ENCODE measurements at regions of chr1 and their contacts with region 1.

Region 1: DNA sequence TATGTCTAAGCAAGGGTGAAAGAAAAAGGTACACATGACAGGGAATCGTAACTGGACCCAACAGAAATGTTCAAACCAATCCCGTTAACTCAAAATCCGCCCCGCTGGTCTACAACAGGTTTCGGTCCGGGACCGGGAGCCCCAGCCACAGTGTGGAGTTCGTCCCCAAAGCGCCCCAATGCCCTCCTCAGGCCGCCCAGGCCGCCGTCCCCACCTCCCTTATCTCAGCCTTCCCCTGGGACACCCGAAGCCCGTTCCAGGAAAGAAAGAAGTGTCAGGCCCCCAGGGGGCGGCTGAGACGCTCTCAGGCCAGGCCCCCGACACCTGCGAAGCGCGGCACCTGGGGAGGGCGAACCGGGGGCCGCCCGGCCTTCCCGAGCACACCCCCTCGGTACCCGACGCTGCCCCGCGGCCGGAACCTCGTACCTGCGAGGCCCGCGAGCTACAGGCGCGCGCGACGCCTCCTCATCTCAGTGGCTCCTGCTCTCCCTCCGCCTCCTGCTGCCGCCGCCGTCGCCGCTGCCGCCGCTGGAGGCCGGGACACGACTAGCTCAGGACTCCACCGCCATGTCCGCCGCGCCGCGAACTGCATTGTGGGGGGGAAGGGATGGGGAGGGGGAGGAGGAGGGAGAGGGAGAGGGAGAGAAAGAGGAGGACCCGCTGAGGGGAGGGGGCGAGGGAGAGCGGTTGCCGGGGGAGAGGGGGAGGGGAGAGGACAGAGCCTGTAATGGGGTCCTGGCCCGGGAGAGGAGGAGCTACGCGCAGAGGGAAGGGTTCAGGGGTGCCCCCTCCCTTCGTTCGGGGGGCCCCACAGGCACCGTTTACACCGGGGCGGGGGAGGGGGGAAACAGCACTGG is at the start of gene TUT4:
- DNase-seq: peak; percentile 87
- H3K4me3 ChIP-seq: peak within 1 kb of the TSS; percentile 93 to 99 (median 96)
- H3K27ac ChIP-seq: peak within 1 kb of the TSS; percentile 88 to 96 (median 92)
- H3K4me1 ChIP-seq: peaks cover 0 to 33% (median 18%) of the 10 kb centered on the region in 4 donors
- H3K27me3 ChIP-seq: no peaks in the 10 kb centered on the region
- CTCF ChIP-seq: no peak
- EP300 ChIP-seq: no peak
- POLR2A ChIP-seq: no peak
- total RNA-seq, gene TUT4: 50.4 to 66.9 (median 58.3) TPM

Region 2: GRCh38 chr1:52404116-52404986 is 148.4 kb before region 1 on chr1 and contains the starts of genes ORC1 and PRPF38A:
- intact Hi-C with region 1: loop called (anchors 5 kb)
- DNase-seq: peak; percentile 99
- H3K4me3 ChIP-seq: peak within 1 kb of the TSS; percentile 56 to 87 (median 78)
- H3K27ac ChIP-seq: peak within 1 kb of the TSS; percentile 84 to 90 (median 89)
- H3K4me1 ChIP-seq: peaks cover 0 to 26% (median 23%) of the 10 kb centered on the region in 4 donors
- H3K27me3 ChIP-seq: no peaks in the 10 kb centered on the region
- CTCF ChIP-seq: peak; percentile 10 to 69 (median 48)
- EP300 ChIP-seq: no peak
- POLR2A ChIP-seq: peak; percentile 39 to 67
- total RNA-seq, gene ORC1: 0.36 to 0.95 TPM in 2 of 4 donors, not detected in the others
- total RNA-seq, gene PRPF38A: 12.4 to 20.0 (median 17.5) TPM

Region 3: GRCh38 chr1:52590275-52590674 is 37.5 kb after region 1 on chr1:
- intact Hi-C with region 1: no loop called
- DNase-seq: no peak
- H3K4me3 ChIP-seq: no peak overlapping the region
- H3K27ac ChIP-seq: no peak overlapping the region
- H3K4me1 ChIP-seq: no peaks in the 10 kb centered on the region
- H3K27me3 ChIP-seq: no peaks in the 10 kb centered on the region
- CTCF ChIP-seq: no peak
- EP300 ChIP-seq: no peak
- POLR2A ChIP-seq: no peak

Region 4: GRCh38 chr1:52601991-52602855 is 49.5 kb after region 1 on chr1 and contains the start of gene GPX7:
- intact Hi-C with region 1: loop called (anchors 2 kb)
- DNase-seq: peak; percentile 70
- H3K4me3 ChIP-seq: peak within 1 kb of the TSS; percentile 46 to 71 (median 64)
- H3K27ac ChIP-seq: peak within 1 kb of the TSS; percentile 80 to 89 (median 84)
- H3K4me1 ChIP-seq: peaks cover 0 to 33% (median 26%) of the 10 kb centered on the region in 4 donors
- H3K27me3 ChIP-seq: no peaks in the 10 kb centered on the region
- CTCF ChIP-seq: no peak
- EP300 ChIP-seq: no peak
- POLR2A ChIP-seq: no peak
- total RNA-seq, gene GPX7: 17.0 to 49.3 (median 24.5) TPM

Region 5: GRCh38 chr1:52697795-52698674 is 145.3 kb after region 1 on chr1 and contains the start of gene COA7:
- intact Hi-C with region 1: loop called (anchors 5 kb)
- DNase-seq: peak; percentile 93
- H3K4me3 ChIP-seq: peak within 1 kb of the TSS; percentile 44 to 77 (median 72)
- H3K27ac ChIP-seq: peak within 1 kb of the TSS; percentile 80 to 86 (median 82)
- H3K4me1 ChIP-seq: peaks cover 0 to 21% (median 16%) of the 10 kb centered on the region in 4 donors
- H3K27me3 ChIP-seq: no peaks in the 10 kb centered on the region
- CTCF ChIP-seq: no peak
- EP300 ChIP-seq: no peak
- POLR2A ChIP-seq: peak; percentile 30 to 38
- total RNA-seq, gene COA7: 6.9 to 8.2 (median 7.9) TPM

Region 6: GRCh38 chr1:52748119-52748518 is 195.4 kb after region 1 on chr1:
- intact Hi-C with region 1: loop called (anchors 2 kb)
- DNase-seq: no peak
- H3K4me3 ChIP-seq: no peak overlapping the region
- H3K27ac ChIP-seq: no peak overlapping the region
- H3K4me1 ChIP-seq: peaks cover 0 to 87% (median 49%) of the 10 kb centered on the region in 4 donors
- H3K27me3 ChIP-seq: no peaks in the 10 kb centered on the region
- CTCF ChIP-seq: peak in 2 of 4 experiments; percentile 31 to 44
- EP300 ChIP-seq: no peak
- POLR2A ChIP-seq: no peak